ENCODE measurements at regions of chr12 and their contacts with region 1.

Region 1: GRCh38 chr12:31801872-31802271 is 73.1 kb upstream of the AMN1 start:
- DNase-seq: no peak

Region 2: DNA sequence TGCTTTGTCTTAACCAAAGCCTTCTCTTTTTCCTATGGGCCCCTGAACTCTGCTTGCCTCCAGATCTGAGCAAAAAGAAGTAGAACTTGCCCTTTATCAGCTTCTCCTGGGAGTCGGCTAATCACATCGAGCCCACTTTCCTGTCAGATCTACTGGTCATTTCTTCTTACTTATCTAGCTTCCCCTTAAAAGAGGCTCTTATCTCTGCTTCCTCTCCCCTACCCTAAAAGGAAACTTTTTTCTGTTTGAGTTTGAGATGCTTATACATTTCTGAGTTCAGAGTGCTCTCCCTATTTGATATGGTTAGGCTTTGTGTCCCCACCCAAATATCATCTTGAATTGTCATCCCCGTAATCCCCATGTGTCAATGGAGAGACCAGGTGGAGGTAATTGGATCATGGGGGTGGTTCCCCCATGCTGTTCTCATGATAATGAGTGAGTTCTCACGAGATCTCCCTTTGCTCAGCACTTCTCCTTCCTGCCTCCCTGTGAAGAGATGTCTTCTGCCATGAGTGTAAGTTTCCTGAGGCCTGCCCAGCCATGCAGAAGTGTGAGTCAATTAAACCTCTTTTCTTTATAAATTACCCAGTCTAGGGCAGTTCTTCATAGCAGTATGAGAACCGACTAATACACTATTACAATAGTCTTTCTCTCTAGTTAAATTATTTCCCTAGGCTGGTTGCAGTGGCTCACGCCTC is 41.7 kb after region 1 on chr12:
- intact Hi-C with region 1: loop called in 1 of 2 experiments (anchors 2 kb)
- DNase-seq: no peak

Region 3: DNA sequence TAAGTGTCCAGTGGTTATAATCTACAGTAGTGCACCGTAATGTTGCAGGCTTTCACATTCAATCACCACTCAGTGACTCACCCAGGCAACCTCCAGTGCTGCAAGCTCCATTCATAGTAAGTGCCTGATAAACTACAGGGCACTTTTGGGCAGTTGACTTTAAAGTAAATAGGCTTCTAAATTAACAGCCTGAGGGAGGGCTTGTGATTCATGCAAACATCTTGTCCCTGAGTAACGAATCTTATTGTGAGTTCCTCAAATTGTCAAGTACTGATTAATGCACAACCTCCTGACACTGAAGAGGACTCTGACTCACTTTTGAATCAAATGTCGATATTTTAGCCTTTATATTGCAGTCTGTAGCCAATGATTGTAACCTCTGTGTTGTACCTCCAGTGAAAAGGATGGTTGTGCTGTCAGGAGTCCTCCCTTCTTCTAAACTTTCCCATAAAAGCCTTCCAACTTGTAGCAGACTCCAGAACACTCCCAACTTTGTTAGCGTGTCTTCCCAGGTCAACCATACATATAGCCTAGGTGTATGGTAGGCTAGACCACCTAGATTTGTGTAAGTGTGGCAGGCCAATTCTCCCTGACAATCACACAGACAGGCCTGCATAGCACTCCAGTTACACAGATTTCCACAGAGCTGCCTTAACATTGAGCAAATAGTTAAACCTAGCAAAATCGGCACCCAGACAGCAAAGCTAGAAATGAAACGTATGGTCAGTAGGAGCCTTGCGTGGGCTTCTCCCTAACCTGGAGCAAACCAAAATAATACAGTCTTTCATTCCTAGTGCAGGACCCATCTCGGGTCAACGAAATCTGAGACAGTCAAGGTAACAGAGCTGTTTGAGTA is 249.9 kb after region 1 on chr12:
- intact Hi-C with region 1: no loop called
- DNase-seq: no peak

Region 4: DNA sequence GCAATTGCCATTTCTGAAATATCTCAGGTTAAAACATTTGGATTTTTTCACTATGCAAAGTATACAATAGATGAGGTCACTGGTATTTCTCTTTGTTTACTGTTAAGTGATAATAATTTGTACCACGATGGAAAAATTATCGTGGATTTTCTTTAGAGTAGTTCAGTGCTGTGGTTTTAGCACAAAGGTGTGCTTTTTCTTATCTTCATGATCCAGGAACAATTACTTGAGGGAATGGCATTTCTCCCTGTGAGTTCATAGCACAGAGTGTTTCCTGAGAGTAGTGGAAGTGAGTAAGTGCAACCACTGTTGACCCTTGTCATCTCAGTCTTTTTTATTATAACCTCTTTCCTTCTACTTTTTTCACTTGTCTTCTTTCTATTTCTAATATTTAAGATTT is 684.3 kb after region 1 on chr12:
- intact Hi-C with region 1: no loop called
- DNase-seq: no peak

Measured in posterior vena cava (tissue), 2 donors.